ENCODE measurements at regions of chr2 and their contacts with region 1.

Region 1: GRCh38 chr2:27174316-27175040 is 25.7 kb downstream of the TCF23 start:
- DNase-seq: no peak
- ATAC-seq: 0 out of 2 replicates have a peak, but pooled peaks have one; percentile 19
- H3K4me3 Mint-ChIP-seq: no peak overlapping the region
- H3K27ac Mint-ChIP-seq: no peak overlapping the region
- H3K4me1 Mint-ChIP-seq: no peaks in the 10 kb centered on the region
- H3K27me3 Mint-ChIP-seq: peaks cover 9% of the 10 kb centered on the region
- CTCF ChIP-seq: no peak

Region 2: GRCh38 chr2:27102329-27102728 is 72.1 kb before region 1 on chr2:
- CTCF ChIA-PET with region 1: interaction called, 14 read pairs
- POLR2A ChIA-PET with region 1: interaction called, 3 read pairs
- DNase-seq: no peak
- ATAC-seq: no peak; the same call in 1 of the 2 replicates
- H3K4me3 Mint-ChIP-seq: no peak overlapping the region
- H3K27ac Mint-ChIP-seq: no peak overlapping the region
- H3K4me1 Mint-ChIP-seq: no peaks in the 10 kb centered on the region
- H3K27me3 Mint-ChIP-seq: 0 out of 2 replicates have a peak, but pooled peaks cover 5% of the 10 kb centered on the region
- CTCF ChIP-seq: no peak

Region 3: GRCh38 chr2:27123302-27124231 is 50.9 kb before region 1 on chr2 and contains the start of gene ABHD1:
- CTCF ChIA-PET with region 1: interaction called, 17 read pairs
- POLR2A ChIA-PET with region 1: no interaction called
- DNase-seq: peak; percentile 71
- ATAC-seq: peak; percentile 84
- H3K4me3 Mint-ChIP-seq: peak within 1 kb of the TSS; percentile 84
- H3K27ac Mint-ChIP-seq: no peak within 1 kb of the TSS
- H3K4me1 Mint-ChIP-seq: peaks cover 16% of the 10 kb centered on the region; the same call in 1 of the 2 replicates
- H3K27me3 Mint-ChIP-seq: peaks cover 61% of the 10 kb centered on the region
- CTCF ChIP-seq: no peak
- total RNA-seq, gene ABHD1: 0.31 to 0.62 TPM (median 0.53 TPM) in 3 replicates

Region 4: GRCh38 chr2:27152786-27153510 is 21.5 kb before region 1 on chr2:
- CTCF ChIA-PET with region 1: interaction called, 43 read pairs
- POLR2A ChIA-PET with region 1: interaction called, 3 read pairs
- DNase-seq: no peak
- ATAC-seq: no peak
- H3K4me3 Mint-ChIP-seq: no peak overlapping the region
- H3K27ac Mint-ChIP-seq: no peak overlapping the region
- H3K4me1 Mint-ChIP-seq: no peaks in the 10 kb centered on the region
- H3K27me3 Mint-ChIP-seq: no peaks in the 10 kb centered on the region
- CTCF ChIP-seq: no peak

Region 5: GRCh38 chr2:27185331-27186026 is 11.0 kb after region 1 on chr2:
- CTCF ChIA-PET with region 1: interaction called, 19 read pairs
- POLR2A ChIA-PET with region 1: no interaction called
- DNase-seq: no peak
- ATAC-seq: no peak
- H3K4me3 Mint-ChIP-seq: no peak overlapping the region
- H3K27ac Mint-ChIP-seq: no peak overlapping the region
- H3K4me1 Mint-ChIP-seq: no peaks in the 10 kb centered on the region
- H3K27me3 Mint-ChIP-seq: peaks cover 6% of the 10 kb centered on the region
- CTCF ChIP-seq: no peak

Region 6: DNA sequence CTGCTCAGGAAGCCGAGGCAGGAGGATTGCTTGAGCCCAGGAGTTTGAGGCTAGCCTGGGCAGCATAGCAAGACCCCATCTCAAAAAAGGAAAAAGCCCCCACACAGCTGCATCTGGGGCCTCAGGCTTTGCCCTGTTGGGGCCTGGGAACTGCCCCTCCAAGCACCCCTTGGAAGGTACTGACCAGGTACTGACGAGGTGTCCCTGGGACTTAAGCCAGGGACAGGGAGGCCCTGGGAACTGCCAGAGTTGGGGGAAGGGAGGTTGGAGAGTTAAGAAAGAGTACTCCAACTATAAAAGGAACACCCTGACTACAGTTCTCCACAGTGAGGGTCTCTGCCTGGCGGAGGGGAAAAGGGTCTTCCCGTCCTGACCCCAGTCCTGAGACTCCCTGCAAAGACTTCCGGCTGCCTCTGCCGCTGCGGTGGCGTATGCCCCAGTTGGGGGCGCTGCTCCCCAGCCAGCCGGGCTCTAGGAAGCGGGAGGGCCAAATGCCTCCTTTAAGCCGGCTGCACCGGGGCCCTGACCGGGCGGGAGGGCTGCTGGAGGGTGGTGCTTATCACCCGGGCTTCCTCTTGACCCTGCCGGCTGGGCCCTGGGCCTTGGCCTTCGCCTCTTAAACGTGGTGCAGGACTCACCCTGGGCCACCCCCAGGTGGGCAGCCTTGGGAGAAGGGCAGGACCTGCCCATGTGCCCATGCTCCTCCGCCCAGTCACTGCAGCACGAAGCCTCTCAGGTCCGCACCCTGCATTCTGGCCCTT is 75.6 kb after region 1 on chr2:
- CTCF ChIA-PET with region 1: interaction called, 15 read pairs
- POLR2A ChIA-PET with region 1: no interaction called
- DNase-seq: peak; percentile 89
- ATAC-seq: peak; percentile 86
- H3K4me3 Mint-ChIP-seq: peak overlapping the region; percentile 63
- H3K27ac Mint-ChIP-seq: no peak overlapping the region
- H3K4me1 Mint-ChIP-seq: peaks cover 18% of the 10 kb centered on the region
- H3K27me3 Mint-ChIP-seq: peaks cover 7% of the 10 kb centered on the region
- CTCF ChIP-seq: peak; percentile 56; the same call in 1 of the 2 replicates

Region 7: DNA sequence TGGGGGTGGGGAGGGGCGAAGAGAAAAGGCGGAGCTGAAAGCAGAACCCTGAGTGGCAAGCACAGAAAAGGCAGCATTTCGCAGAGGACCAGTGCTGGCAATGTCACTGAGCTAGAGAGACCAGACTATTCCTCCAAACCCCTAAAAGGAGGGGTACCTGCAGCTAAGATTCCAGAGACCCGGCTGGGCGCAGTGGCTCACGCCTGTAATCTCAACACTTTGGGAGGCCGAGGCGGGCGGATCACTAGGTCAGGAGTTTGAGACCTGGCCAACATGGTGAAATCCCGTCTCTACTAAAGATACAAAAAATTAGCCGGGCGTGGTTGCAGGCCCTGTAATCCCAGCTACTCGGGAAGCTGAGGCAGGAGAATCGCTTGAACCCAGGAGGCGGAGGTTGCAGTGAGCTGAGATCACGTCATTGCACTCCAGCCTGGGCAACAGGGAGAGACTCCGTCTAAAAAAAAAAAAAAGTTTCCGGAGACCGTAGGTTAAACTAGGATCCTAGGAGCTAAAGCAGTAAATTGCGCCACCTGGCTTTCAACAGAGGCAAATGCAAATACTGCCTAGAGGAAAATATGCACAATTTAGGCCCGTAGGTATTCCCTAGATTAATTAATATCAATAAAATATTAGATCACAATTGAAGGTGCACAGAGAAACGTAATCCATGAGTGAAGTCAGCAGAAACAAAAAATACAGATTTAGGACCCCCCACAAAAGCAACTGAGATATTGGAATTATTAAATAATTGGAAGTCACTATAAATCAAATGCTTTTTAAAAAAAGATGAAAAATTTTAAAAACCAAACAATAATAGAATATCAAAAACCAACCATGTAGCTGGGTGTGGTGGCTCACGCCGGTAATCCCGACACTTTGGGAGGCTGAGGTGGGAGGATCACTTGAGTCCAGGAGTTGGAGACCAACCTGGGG is 128.9 kb after region 1 on chr2:
- CTCF ChIA-PET with region 1: interaction called, 11 read pairs
- POLR2A ChIA-PET with region 1: no interaction called
- DNase-seq: no peak
- ATAC-seq: peak; percentile 21
- H3K4me3 Mint-ChIP-seq: peak overlapping the region; percentile 50
- H3K27ac Mint-ChIP-seq: no peak overlapping the region
- H3K4me1 Mint-ChIP-seq: peaks cover 8% of the 10 kb centered on the region; the same call in 1 of the 2 replicates
- H3K27me3 Mint-ChIP-seq: peaks cover 39% of the 10 kb centered on the region
- CTCF ChIP-seq: peak; percentile 92

Measured in WTC11 (cell line).